Prostate gland (tissue), 2 donors: ENCODE measurements at regions of chr7 and their contacts with region 1.

Region 1: DNA sequence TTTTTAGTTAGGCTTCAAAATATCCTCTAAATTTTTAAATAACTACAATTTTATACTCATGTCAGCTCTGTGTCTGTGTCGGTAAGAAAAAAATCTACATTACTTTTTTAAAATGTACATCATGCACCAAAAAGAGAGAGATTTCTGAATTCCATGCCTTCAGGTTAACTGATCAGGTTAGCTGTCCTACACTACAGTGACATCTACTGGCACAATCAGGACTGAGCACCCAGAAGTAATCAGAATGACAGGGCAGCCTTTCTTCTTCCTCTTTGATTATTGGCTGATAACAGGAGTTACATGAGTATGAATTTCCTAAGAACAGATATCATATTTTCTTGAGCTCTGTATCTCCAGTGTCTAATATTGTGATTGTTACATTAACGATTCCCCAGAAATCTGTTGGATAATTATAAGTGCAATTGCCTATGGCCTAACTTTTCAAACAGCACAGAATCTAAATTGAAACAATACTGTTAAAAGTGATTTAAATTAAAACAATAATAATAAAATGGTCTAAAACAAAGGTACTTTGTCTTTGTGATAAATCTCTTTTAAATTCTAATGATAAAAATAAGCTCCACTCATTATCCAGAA is 41.8 kb upstream of the HYCC1 start:
- DNase-seq: peak; percentile 39
- H3K4me3 ChIP-seq: no peak overlapping the region
- H3K27ac ChIP-seq: no peak overlapping the region
- H3K4me1 ChIP-seq: no peaks in the 10 kb centered on the region
- H3K27me3 ChIP-seq: no peaks in the 10 kb centered on the region
- CTCF ChIP-seq: peak; percentile 14 to 81 (median 64)
- POLR2A ChIP-seq: no peak

Region 2: DNA sequence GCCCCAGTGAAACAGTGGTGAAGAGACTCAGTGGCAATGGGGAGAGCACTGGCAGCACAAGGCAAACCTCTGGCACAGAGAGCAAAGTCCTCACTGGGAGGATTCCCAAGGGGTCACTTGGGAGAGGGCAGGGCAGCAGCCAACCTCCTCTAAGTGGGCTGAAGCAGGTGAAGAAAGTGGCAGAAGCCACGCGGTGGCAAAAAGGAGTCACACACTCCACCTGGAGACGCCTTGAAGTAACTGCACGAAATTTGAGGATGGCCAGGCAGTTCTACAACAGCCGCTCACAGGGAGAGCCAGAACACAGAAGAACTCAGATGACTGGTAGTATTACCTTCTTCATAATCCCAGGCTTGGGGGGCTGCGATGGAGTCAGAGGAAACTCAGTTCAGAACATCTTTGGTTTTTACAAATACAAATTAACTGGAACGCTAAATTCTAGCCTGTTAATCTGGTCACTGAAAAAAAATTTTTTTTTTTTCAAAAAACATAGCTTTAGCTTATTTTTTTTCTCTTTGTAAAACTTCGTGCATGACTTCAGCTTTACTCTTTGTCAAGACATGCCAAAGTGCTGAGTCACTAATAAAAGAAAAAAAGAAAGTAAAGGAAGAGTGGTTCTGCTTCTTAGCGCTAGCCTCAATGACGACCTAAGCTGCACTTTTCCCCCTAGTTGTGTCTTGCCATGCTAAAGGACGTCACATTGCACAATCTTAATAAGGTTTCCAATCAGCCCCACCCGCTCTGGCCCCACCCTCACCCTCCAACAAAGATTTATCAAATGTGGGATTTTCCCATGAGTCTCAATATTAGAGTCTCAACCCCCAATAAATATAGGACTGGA is 329.1 kb before region 1 on chr7:
- intact Hi-C with region 1: loop called (anchors 5 kb)
- DNase-seq: peak; percentile 20
- H3K4me3 ChIP-seq: no peak overlapping the region
- H3K27ac ChIP-seq: no peak overlapping the region
- H3K4me1 ChIP-seq: no peaks in the 10 kb centered on the region
- H3K27me3 ChIP-seq: no peaks in the 10 kb centered on the region
- CTCF ChIP-seq: peak in 3 of 4 experiments; percentile 28 to 50 (median 46)
- POLR2A ChIP-seq: no peak

Region 3: GRCh38 chr7:22822486-22823141 is 233.1 kb before region 1 on chr7 and contains the start of gene TOMM7:
- intact Hi-C with region 1: loop called (anchors 2 kb)
- DNase-seq: peak; percentile 81
- H3K4me3 ChIP-seq: peak within 1 kb of the TSS; percentile 63 to 72
- H3K27ac ChIP-seq: peak within 1 kb of the TSS; percentile 62
- H3K4me1 ChIP-seq: no peaks in the 10 kb centered on the region
- H3K27me3 ChIP-seq: no peaks in the 10 kb centered on the region
- CTCF ChIP-seq: peak; percentile 29 to 74 (median 66)
- POLR2A ChIP-seq: peak; percentile 26
- total RNA-seq, gene TOMM7: 124 to 190 TPM